Ascending aorta (tissue), 2 donors: ENCODE measurements at regions of chr7 and their contacts with region 1.

Region 1: GRCh38 chr7:27031289-27032172 is 64.3 kb downstream of the HOXA1 start:
- DNase-seq: no peak
- H3K4me3 ChIP-seq: no peak overlapping the region
- H3K27ac ChIP-seq: peak overlapping the region; percentile 67 to 72
- H3K4me1 ChIP-seq: peaks cover 0 to 8% of the 10 kb centered on the region in 2 donors
- H3K27me3 ChIP-seq: no peaks in the 10 kb centered on the region
- CTCF ChIP-seq: no peak

Region 2: DNA sequence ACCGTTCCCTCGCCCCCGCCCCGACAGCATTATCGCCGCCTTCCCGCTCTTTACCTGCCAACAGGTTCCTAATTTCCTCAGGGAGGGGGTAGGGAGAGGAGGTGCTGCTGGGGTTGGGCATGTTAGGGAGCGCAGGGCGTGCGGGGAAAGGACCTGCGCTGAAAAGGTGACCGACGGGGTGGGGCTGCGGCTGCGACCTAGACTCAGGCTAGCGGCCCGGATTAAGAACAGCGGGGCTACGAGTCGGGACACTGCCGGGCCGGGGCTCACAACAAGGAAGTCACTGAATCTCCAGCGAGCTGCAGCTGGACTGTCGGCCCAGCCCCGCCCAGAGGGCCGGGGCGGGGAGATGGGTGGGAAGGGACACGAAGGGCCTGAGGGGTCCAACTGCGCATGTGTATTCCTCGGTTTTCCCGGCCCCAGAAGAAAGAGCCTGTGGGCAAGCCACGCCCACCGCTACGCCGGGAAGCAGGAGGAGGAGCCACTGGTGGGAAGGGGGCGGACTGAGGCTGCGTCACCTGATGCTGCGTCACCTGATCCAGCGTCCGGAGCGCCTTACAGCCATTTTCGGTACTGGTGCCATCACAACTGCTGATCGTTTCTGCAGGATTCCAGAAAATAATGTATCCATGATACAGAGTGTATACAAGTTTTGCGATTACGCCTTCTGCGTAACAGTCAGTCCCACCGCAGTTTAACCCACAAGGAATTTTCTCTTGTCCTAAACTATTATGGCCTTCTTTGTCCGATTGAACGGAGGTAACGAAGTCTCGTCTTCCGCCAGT is 167.0 kb before region 1 on chr7 and contains the start of gene SKAP2:
- intact Hi-C with region 1: loop called (anchors 5 kb)
- DNase-seq: peak; percentile 92 to 99
- H3K4me3 ChIP-seq: peak within 1 kb of the TSS; percentile 66 to 89
- H3K27ac ChIP-seq: peak within 1 kb of the TSS; percentile 87 to 90
- H3K4me1 ChIP-seq: no peaks in the 10 kb centered on the region
- H3K27me3 ChIP-seq: no peaks in the 10 kb centered on the region
- CTCF ChIP-seq: peak in 1 of 3 experiments; percentile 11
- total RNA-seq, gene SKAP2: 50.2 TPM

Region 3: GRCh38 chr7:27010068-27010467 is 21.5 kb before region 1 on chr7:
- intact Hi-C with region 1: no loop called
- DNase-seq: no peak
- H3K4me3 ChIP-seq: no peak overlapping the region
- H3K27ac ChIP-seq: no peak overlapping the region
- H3K4me1 ChIP-seq: no peaks in the 10 kb centered on the region
- H3K27me3 ChIP-seq: no peaks in the 10 kb centered on the region
- CTCF ChIP-seq: no peak

Region 4: GRCh38 chr7:27130540-27131389 is 99.2 kb after region 1 on chr7 and contains the start of gene HOXA4:
- intact Hi-C with region 1: loop called (anchors 5 kb)
- DNase-seq: peak; percentile 62 to 96
- H3K4me3 ChIP-seq: peak within 1 kb of the TSS; percentile 87
- H3K27ac ChIP-seq: peak within 1 kb of the TSS; percentile 86 to 89
- H3K4me1 ChIP-seq: peaks cover 0 to 2% of the 10 kb centered on the region in 2 donors
- H3K27me3 ChIP-seq: no peaks in the 10 kb centered on the region
- CTCF ChIP-seq: no peak
- total RNA-seq, gene HOXA4: 2.1 TPM